ENCODE measurements at regions of chr1 and their contacts with region 1.

Region 1: GRCh38 chr1:206106328-206107167 is 10.6 kb downstream of the AVPR1B start:
- DNase-seq: peak; percentile 84
- H3K4me3 ChIP-seq: no peak overlapping the region; a peak in 1 of 4 replicates
- H3K27ac ChIP-seq: no peak overlapping the region
- H3K4me1 ChIP-seq: no peaks in the 10 kb centered on the region
- H3K27me3 ChIP-seq: peaks cover 11% of the 10 kb centered on the region; the same call in 1 of the 2 replicates
- CTCF ChIP-seq: peak; percentile 90
- EP300 ChIP-seq: no peak
- RAD21 ChIP-seq: peak; percentile 92

Region 2: DNA sequence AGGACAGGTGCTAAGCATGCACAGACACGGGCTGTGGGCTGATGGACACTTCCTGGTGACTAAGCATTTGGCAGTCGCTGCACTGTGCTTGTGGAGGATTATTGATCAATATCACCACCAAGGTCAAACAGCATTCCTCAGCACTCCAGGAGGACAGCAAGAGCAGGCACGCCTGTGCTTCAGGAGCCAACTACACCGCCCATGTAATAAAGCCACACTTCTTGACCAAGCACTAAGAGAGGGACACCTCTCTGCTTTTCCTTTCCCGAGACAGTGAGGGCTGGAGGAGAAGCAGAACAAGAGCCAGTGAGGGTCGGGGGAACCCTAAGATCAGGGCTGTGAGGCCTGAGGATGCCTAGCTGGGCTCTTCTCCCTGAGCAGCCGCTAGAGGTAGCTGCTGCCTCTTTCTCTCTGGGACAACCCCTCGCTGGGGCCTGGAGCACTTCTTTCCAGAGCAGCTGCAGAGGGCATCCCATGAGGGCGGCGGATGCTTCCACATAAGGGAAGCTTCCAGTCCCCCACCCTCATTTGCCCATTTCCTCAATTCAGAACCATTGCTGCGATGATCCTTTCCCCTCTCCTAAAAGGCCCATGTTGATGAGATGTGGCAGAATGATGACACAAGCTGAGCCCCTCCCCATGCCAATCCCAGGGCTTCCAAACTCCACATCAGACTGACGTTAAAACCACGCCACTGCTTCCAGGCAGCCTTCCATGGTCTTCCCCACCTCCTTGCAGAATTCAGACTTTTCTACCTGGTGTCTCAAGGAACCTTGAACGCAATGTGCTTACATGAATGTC is 122.4 kb before region 1 on chr1:
- CTCF ChIA-PET with region 1: interaction called, 109 read pairs
- POLR2A ChIA-PET with region 1: no interaction called
- DNase-seq: peak; percentile 74
- H3K4me3 ChIP-seq: no peak overlapping the region; a peak in 1 of 4 replicates
- H3K27ac ChIP-seq: no peak overlapping the region
- H3K4me1 ChIP-seq: peaks cover 0 to 10% of the 10 kb centered on the region in 2 experiments; a peak in 1 of 4 replicates
- H3K27me3 ChIP-seq: no peaks in the 10 kb centered on the region
- CTCF ChIP-seq: peak; percentile 78
- EP300 ChIP-seq: no peak
- RAD21 ChIP-seq: peak; percentile 78

Region 3: DNA sequence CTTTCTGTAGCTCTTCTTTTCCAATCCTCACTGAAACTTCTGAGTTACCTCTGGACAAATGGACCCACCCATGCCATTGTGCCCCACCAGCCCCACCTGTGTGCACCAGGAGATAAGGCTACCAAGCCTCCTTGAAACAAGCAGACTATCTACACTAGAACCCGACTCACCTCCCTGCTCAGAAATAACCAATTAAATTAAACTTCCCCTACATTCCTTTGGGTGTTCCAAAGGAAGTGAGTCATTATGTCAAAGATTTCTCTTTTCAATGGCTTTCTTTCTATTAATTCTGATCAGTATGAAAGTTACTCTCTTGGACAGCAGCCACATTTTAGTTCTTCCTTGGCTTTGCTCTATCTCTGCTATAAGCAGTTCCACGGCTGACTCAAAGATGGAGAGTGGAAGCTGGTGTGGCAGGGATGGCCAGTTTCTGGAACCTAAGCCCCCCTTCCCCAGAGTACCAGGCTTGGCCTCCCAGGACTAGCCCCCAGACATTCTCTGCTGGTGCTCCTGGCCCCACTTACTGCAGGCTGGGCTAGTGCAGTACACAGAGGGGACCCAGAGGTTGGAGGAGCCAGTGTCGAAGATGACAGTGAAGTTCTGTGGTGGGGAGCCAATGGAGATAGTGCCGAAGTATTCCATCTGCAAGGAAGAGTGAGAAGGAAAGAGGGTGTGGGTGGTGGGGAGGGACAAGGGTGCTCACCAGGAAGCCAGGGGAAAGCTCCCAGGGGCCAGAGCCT is 84.8 kb before region 1 on chr1:
- CTCF ChIA-PET with region 1: interaction called, 13 read pairs
- POLR2A ChIA-PET with region 1: no interaction called
- DNase-seq: no peak
- H3K4me3 ChIP-seq: no peak overlapping the region
- H3K27ac ChIP-seq: no peak overlapping the region
- H3K4me1 ChIP-seq: peaks cover 3 to 11% of the 10 kb centered on the region in 2 experiments; a peak in 2 of 4 replicates
- H3K27me3 ChIP-seq: no peaks in the 10 kb centered on the region; the same call in 1 of the 2 replicates
- CTCF ChIP-seq: no peak
- EP300 ChIP-seq: no peak
- RAD21 ChIP-seq: no peak

Region 4: DNA sequence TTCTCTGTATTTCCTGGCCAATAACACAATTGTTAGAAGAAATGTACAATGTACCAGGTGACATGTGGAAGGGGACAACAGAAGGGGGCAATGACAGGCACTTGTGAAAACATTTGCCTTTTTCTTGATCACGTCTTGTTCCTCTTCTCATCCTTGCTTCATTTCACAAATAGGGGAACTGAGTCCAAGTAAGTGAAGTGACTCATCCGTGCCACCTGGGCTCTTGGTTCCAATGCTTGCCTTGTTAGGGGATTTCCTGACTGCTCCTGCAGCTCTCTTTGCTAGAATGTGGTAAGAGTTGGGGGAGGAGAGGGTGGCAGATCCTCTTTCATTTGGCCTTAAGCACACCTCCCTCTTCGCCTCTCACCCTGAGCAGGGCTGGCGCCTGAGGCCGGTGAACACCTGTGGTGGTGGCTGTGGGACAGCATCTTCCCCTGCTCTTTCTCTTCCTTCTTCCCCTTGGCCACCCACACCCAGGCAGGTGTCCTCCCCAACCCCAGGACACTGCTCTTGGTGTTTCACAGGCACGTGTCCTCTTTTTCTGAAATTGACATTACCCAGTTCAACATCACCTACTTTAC is 55.8 kb before region 1 on chr1:
- CTCF ChIA-PET with region 1: interaction called, 10 read pairs
- POLR2A ChIA-PET with region 1: no interaction called
- DNase-seq: no peak
- H3K4me3 ChIP-seq: no peak overlapping the region
- H3K27ac ChIP-seq: no peak overlapping the region
- H3K4me1 ChIP-seq: no peaks in the 10 kb centered on the region
- H3K27me3 ChIP-seq: peaks cover 11% of the 10 kb centered on the region; the same call in 1 of the 2 replicates
- CTCF ChIP-seq: no peak
- EP300 ChIP-seq: no peak
- RAD21 ChIP-seq: no peak

Region 5: DNA sequence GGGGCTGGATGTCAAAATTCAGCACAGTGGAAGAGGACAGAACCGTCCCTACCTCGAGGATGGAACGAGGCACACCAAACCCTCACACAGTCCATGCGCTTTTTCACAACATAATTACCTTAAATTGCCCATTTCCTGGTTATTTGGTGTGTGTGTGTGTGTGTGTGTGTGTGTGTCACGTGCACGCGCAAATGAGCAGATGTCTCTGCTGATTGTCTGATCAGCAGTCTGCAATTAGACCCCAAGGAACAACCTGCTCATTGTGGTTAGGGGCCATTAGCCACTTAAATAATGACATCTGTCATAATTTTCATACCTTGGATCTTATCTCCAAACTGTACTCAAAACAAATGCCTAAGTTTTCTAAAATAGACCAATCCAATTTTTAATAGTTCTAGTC is 12.5 kb before region 1 on chr1:
- CTCF ChIA-PET with region 1: interaction called, 17 read pairs
- POLR2A ChIA-PET with region 1: no interaction called
- DNase-seq: no peak
- H3K4me3 ChIP-seq: no peak overlapping the region
- H3K27ac ChIP-seq: peak overlapping the region in 1 of 2 experiments; percentile 35; a peak in 2 of 4 replicates
- H3K4me1 ChIP-seq: peaks cover 0 to 5% of the 10 kb centered on the region in 2 experiments; a peak in 2 of 4 replicates
- H3K27me3 ChIP-seq: no peaks in the 10 kb centered on the region
- CTCF ChIP-seq: no peak
- EP300 ChIP-seq: peak in 1 of 2 experiments; percentile 72; a peak in 2 of 4 replicates
- RAD21 ChIP-seq: no peak

Region 6: DNA sequence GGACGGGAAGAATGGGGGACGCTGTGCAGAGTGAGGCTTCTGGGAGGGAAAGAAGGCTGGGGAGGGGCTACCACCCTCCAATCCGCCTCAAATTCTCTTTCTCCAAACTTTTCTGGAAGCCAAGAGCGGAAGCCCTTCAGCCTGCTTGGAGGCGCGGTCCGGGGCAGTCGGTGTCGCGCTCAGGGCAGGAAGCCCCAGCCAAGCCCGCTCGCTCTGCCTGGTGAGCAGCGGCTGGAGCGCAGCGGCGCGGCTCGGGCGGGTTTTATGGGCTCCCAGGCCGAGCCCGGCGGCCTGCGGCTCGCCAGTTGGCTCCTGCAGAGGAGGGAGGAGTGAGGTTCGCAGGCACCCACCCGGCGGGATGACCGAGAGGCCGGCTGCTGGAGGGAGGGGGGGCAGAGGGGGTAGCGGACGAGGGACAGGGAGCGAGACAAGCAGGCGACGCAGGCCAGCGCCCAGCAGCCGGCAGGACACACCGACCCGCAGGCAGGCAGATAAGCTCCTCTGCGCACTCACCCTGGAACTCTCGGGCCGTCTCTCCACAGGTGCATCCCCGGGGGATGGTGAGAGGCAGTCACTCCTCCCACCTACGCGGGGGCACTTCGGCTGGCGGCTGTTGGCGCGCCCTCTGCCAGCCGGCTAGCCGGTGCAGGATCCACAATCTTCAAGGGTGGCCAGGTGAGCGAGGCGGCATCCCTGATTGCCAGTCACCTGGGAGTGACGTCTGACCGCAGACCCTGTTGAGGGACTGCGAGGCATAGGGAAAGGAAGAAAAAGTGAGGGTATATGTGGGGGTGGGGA is 10.8 kb after region 1 on chr1 and contains the start of gene AVPR1B:
- CTCF ChIA-PET with region 1: interaction called, 24 read pairs
- POLR2A ChIA-PET with region 1: interaction called, 3 read pairs
- DNase-seq: peak; percentile 87
- H3K4me3 ChIP-seq: peak within 1 kb of the TSS; percentile 41 to 57
- H3K27ac ChIP-seq: no peak within 1 kb of the TSS
- H3K4me1 ChIP-seq: peaks cover 0 to 10% of the 10 kb centered on the region in 2 experiments; a peak in 1 of 4 replicates
- H3K27me3 ChIP-seq: peaks cover 34% of the 10 kb centered on the region
- CTCF ChIP-seq: 0 out of 2 replicates have a peak, but pooled peaks have one; percentile 8
- EP300 ChIP-seq: no peak
- RAD21 ChIP-seq: no peak
- polyA plus RNA-seq, gene AVPR1B: not detected in 2 replicates

Measured in SK-N-SH (cell line).